ENCODE measurements at regions of chr4 and their contacts with region 1.

Region 1: GRCh38 chr4:107736924-107737448 is 17.0 kb upstream of the PAPSS1 start:
- DNase-seq: peak; percentile 45
- H3K4me3 ChIP-seq: no peak overlapping the region; a peak in 1 of 4 replicates
- H3K27ac ChIP-seq: no peak overlapping the region
- H3K4me1 ChIP-seq: peaks cover 11 to 38% of the 10 kb centered on the region in 2 experiments; a peak in 3 of 4 replicates
- H3K27me3 ChIP-seq: no peaks in the 10 kb centered on the region
- CTCF ChIP-seq: peak; percentile 81
- EP300 ChIP-seq: no peak
- RAD21 ChIP-seq: peak; percentile 81

Region 2: GRCh38 chr4:107719922-107720722 is 16.9 kb before region 1 on chr4 and contains the start of gene PAPSS1:
- CTCF ChIA-PET with region 1: interaction called, 13 read pairs
- POLR2A ChIA-PET with region 1: interaction called, 7 read pairs
- DNase-seq: peak; percentile 96
- H3K4me3 ChIP-seq: peak within 1 kb of the TSS; percentile 93
- H3K27ac ChIP-seq: peak within 1 kb of the TSS; percentile 69 to 94
- H3K4me1 ChIP-seq: peaks cover 10 to 23% of the 10 kb centered on the region in 2 experiments
- H3K27me3 ChIP-seq: no peaks in the 10 kb centered on the region
- CTCF ChIP-seq: no peak
- EP300 ChIP-seq: no peak; a peak in 1 of 4 replicates
- RAD21 ChIP-seq: no peak
- polyA plus RNA-seq, gene PAPSS1: 70.1 and 94.1 TPM in 2 replicates

Region 3: DNA sequence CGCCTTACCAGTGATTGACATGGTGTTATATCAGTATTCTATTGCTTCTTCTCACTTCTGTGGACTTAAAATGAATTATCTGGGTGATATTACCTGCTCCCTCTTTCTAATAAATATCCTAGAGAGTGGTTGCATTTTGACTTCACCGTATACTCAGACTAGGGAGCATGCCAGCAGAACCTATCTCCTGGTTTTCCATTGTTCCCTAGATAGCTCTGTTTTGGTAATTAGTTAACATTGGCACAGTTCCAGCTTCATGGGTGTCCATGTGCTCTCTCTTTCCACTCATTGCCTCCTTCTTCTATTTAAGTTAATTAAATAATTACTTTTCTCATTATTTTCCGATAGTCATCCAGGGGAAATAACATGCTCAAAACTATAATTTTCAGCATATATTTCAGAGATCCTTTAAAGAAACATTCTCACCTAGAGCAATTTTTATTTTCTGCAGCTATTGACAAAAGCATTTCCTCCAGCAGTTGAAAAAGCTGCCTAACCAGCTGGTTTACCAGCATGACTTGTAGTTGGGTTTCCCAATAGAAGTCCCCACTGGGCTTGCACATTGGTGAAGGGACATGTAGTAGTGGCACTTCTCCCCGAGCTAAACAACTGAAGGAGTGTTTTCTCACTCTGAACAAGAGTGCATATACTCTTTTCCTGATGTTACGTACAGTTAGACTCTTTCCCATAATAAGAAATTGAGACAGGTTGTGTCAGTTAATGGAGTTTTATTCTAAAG is 10.9 kb after region 1 on chr4:
- CTCF ChIA-PET with region 1: interaction called, 23 read pairs
- POLR2A ChIA-PET with region 1: no interaction called
- DNase-seq: no peak
- H3K4me3 ChIP-seq: no peak overlapping the region
- H3K27ac ChIP-seq: no peak overlapping the region
- H3K4me1 ChIP-seq: no peaks in the 10 kb centered on the region
- H3K27me3 ChIP-seq: peaks cover 16% of the 10 kb centered on the region; the same call in 1 of the 2 replicates
- CTCF ChIP-seq: no peak
- EP300 ChIP-seq: no peak
- RAD21 ChIP-seq: no peak

Region 4: GRCh38 chr4:108783665-108784463 is 1046.9 kb after region 1 on chr4:
- CTCF ChIA-PET with region 1: no interaction called
- POLR2A ChIA-PET with region 1: no interaction called
- DNase-seq: no peak
- H3K4me3 ChIP-seq: no peak overlapping the region
- H3K27ac ChIP-seq: no peak overlapping the region
- H3K4me1 ChIP-seq: no peaks in the 10 kb centered on the region
- H3K27me3 ChIP-seq: peaks cover 7% of the 10 kb centered on the region; the same call in 1 of the 2 replicates
- CTCF ChIP-seq: peak; percentile 46
- EP300 ChIP-seq: no peak
- RAD21 ChIP-seq: peak; percentile 40